AG04449 (cell line): ENCODE measurements at regions of chr16 and their contacts with region 1.

Region 1: DNA sequence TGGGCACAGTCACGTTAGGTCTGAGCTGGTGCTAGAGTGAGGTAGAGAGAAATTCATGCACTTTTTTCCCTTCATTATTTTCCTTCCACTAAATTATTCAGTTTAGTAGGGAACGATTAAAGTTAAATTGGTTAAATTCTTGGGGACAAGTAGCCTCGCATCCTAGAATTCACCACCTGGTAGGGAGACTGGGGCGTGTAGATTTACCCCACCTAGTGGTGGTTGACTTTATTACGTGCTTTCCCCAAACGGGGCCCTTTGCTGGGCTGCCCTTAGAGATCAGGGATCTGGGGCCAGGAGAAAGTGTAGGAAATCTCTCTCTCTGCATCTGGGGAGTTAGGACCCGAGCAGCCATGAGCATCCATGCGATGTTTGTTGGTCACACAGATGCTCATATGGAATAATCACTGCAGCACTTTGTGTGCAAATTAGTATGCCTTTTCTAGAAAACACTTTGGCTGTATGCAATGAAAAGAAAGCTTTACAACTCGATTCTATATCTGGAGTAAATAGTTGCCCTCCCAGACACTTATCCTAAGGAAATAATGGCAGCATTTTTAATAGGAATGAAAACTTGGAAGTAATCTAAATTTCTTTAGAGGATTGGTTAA is 107.0 kb downstream of the PLCG2 start:
- DNase-seq: no peak
- H3K4me3 ChIP-seq: no peak overlapping the region
- CTCF ChIP-seq: peak; percentile 56

Region 2: DNA sequence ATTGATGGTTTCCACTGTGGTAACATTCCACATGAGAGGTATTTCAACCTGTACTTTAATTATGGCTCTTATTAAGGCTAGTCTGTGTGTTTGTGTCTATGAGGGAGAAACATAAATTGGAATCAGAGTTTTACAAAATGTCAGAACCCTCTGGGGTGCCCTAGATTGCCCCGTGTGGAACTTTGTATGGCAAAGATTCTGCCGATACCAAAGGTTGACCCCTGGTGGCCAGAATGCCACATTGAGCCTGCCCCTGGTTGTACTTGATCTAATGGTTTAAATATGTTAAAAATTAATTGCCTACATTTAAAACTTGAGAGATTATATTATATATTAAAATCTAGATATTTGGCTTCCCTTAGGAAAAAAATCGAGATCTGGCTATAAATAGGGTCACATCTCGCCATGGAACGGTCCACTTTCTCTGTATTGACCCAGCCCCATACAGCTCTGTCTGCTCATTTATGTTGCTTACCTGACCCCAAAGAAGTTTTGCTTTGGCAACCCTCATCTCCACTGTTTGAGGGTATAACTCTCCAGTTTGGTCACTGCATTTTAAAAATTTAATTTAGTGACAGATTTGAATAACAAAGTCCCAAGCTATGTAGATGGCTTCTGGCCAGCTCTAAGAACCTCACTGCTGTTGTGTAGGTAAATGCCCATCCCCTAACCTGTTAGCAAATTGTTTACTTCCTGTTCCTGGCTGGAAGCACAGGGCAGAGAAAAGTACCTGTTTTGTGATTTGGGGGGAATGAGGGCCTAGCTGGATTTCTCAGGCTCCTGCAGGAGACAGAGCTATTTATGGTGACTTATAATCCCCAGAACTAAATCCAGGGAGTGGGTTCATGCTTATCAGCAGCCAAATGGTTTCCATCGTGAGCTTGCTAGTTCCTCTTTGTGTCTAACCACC is 12.0 kb before region 1 on chr16:
- CTCF ChIA-PET with region 1: interaction called, 44 read pairs
- POLR2A ChIA-PET with region 1: no interaction called
- DNase-seq: no peak
- H3K4me3 ChIP-seq: no peak overlapping the region
- CTCF ChIP-seq: peak; percentile 74